ENCODE measurements at regions of chr17 and their contacts with region 1.

Region 1: GRCh38 chr17:74305865-74306654 is 20.0 kb upstream of the KIF19 start:
- DNase-seq: no peak
- ATAC-seq: no peak
- H3K4me3 ChIP-seq: no peak overlapping the region
- H3K27ac ChIP-seq: no peak overlapping the region
- H3K4me1 ChIP-seq: no peaks in the 10 kb centered on the region
- H3K27me3 ChIP-seq: no peaks in the 10 kb centered on the region
- CTCF ChIP-seq: no peak
- POLR2A ChIP-seq: no peak

Region 2: DNA sequence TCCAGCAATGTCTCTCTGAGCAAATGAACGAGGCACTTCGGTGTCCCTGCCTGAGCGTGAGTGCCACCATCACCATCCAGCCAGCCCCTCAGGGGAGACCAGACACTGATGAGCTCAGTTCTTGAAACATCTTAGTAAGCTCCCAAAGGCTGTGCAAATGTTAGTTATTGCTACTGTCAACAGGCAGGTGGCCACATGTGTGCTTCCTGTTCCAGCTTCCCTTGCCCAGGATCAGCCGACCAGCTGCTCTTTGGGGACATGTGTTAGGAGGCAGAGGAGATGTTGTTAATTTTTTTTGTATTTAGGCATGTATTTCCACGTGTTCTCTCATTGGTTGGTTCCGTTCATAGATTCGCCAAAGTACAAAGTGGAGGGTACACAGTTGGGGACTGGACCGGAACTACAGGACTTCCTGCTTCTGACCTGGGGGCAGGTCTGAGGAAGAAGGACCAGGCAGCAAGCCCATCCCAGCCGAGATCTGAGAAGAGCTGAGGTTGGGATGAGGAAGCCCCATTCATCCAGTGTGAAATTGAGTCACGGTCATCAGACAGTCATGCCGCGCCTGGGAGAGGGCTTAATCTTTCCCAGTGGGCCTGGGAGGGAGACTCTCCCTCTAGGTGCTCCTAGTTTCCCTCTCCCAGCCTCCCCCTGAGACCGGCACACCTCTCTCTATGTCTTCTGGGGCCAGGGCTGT is 88.9 kb before region 1 on chr17:
- intact Hi-C with region 1: no loop called
- DNase-seq: no peak
- ATAC-seq: no peak
- H3K4me3 ChIP-seq: no peak overlapping the region
- H3K27ac ChIP-seq: no peak overlapping the region
- H3K4me1 ChIP-seq: peaks cover 0 to 12% (median 2%) of the 10 kb centered on the region in 4 donors
- H3K27me3 ChIP-seq: no peaks in the 10 kb centered on the region
- CTCF ChIP-seq: no peak
- POLR2A ChIP-seq: no peak

Region 3: GRCh38 chr17:74368092-74369081 is 62.3 kb after region 1 on chr17:
- intact Hi-C with region 1: loop called in 1 of 2 experiments (anchors 10 kb)
- DNase-seq: peak; percentile 76 to 80 (median 79)
- ATAC-seq: peak; percentile 87 to 95 (median 94)
- H3K4me3 ChIP-seq: no peak overlapping the region
- H3K27ac ChIP-seq: no peak overlapping the region
- H3K4me1 ChIP-seq: peaks cover 0 to under 1% (median 0%) of the 10 kb centered on the region in 4 donors
- H3K27me3 ChIP-seq: no peaks in the 10 kb centered on the region
- CTCF ChIP-seq: peak; percentile 91 to 94 (median 93)
- POLR2A ChIP-seq: no peak

Region 4: DNA sequence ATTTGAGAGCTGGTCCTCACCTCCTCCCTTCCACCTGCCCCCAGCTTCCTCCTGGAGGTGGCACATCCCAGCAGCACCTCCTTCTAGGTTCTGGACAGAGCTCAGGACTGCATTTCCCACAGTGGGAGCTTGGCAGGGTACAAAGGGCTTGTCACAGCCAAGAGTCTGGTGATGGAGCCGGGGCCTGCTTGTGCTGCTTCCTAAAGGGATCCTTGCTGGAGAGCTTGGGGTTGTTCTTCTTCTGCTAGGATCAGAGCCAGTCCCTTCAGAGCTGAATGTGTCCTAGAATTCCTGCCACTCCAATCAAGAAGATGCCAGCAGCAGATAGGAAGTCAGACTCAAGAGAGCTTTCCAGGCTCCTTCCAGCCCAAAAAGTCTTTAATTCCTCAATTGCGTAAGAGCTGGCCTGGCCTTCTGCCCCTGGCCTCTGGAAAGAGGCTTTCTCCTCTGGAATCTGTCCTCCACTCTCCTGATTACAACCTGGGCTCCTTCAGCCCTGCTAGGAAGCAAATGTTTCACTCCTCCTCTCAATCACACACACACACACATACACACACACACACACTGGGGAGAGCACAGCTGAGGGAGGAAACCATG is 313.1 kb after region 1 on chr17:
- intact Hi-C with region 1: no loop called
- DNase-seq: no peak
- ATAC-seq: no peak
- H3K4me3 ChIP-seq: no peak overlapping the region
- H3K27ac ChIP-seq: no peak overlapping the region
- H3K4me1 ChIP-seq: no peaks in the 10 kb centered on the region
- H3K27me3 ChIP-seq: no peaks in the 10 kb centered on the region
- CTCF ChIP-seq: no peak
- POLR2A ChIP-seq: no peak

Measured in right lobe of liver (tissue), 6 donors.